ENCODE measurements at regions of chr1 and their contacts with region 1.

Region 1: DNA sequence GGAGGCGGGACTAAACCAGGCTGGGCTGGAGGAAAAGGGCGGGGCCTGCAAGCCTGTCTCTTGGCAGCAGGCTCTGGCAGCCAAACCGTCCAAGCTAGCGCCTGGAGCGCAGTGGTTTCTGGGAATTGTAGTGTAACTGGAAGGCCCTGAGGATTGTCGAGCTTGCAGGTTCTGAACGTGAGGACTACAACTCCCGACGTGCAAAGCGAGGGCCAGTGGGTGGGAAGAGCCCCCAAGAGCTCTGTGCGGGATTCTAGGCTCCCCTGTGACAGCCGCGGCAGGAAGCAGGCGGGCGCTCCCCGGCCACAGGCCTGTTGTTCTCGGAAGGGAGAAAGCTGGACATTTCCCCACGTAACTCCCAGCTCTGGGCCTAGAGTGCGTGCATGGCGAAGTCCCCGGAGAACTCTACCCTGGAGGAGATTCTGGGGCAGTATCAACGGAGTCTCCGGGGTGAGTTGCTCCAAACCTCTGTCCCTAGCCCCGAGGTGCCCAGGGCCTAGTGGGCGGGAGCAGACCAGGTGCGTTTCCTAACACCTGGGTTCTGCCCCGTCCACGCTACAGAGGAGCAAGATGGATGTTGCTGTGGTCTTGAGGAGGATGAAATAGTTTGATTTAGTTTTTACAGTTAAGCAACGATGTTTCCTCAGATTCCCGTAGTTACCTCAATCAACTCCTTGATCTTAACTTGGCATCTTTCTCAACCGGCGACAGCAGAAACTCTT is at the start of gene SDCCAG8:
- DNase-seq: peak; percentile 100
- ATAC-seq: peak; percentile 75
- H3K4me3 ChIP-seq: peak within 1 kb of the TSS; percentile 85
- H3K27ac ChIP-seq: peak within 1 kb of the TSS; percentile 77
- H3K4me1 ChIP-seq: peaks cover 32% of the 10 kb centered on the region
- H3K27me3 ChIP-seq: no peaks in the 10 kb centered on the region
- CTCF ChIP-seq: no peak
- total RNA-seq, gene SDCCAG8: 99.3 and 194 TPM in 2 replicates

Region 2: DNA sequence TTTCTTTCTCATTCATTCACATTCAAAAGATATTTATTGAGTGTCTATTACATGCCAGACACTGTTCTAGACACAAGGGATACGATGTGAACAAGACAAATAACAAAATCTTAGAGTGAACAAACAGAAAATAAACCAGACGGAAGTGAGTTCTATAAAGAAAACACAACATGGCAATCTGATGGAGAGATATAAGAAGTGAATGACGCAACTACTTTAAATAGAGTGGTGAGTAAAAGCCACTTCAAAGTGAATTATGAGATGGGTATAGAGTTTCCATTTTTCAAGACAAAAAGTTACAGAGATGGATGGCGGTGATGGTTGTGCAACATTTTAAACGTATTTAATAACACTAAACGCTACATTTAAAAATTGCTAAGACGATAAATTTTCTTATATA is 76.2 kb before region 1 on chr1:
- CTCF ChIA-PET with region 1: no interaction called
- POLR2A ChIA-PET with region 1: no interaction called
- intact Hi-C with region 1: loop called (anchors 5 kb)
- DNase-seq: peak; percentile 34
- ATAC-seq: no peak
- H3K4me3 ChIP-seq: no peak overlapping the region
- H3K27ac ChIP-seq: no peak overlapping the region
- H3K4me1 ChIP-seq: no peaks in the 10 kb centered on the region
- H3K27me3 ChIP-seq: no peaks in the 10 kb centered on the region
- CTCF ChIP-seq: no peak

Region 3: DNA sequence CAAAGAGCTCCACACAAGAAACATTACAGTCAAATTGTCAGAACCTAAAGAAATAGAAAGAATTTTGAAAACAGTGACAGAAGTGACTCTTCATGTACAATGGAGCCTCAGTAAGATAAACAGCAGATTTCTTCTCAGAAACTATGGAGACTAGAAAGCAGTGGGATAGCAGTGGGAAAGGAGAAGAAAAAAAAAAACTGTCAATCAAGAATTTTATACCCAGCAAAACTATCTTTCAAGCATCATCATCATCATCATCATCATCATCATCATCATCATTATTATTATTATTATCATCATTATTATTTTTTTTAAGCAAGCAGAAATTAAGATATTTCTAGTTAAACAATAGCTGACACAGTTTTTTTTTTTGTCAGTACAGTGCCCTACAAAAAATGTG is 25.0 kb before region 1 on chr1:
- CTCF ChIA-PET with region 1: no interaction called
- POLR2A ChIA-PET with region 1: no interaction called
- intact Hi-C with region 1: no loop called
- DNase-seq: peak; percentile 58
- ATAC-seq: no peak
- H3K4me3 ChIP-seq: no peak overlapping the region
- H3K27ac ChIP-seq: no peak overlapping the region
- H3K4me1 ChIP-seq: no peaks in the 10 kb centered on the region
- H3K27me3 ChIP-seq: no peaks in the 10 kb centered on the region
- CTCF ChIP-seq: no peak

Region 4: DNA sequence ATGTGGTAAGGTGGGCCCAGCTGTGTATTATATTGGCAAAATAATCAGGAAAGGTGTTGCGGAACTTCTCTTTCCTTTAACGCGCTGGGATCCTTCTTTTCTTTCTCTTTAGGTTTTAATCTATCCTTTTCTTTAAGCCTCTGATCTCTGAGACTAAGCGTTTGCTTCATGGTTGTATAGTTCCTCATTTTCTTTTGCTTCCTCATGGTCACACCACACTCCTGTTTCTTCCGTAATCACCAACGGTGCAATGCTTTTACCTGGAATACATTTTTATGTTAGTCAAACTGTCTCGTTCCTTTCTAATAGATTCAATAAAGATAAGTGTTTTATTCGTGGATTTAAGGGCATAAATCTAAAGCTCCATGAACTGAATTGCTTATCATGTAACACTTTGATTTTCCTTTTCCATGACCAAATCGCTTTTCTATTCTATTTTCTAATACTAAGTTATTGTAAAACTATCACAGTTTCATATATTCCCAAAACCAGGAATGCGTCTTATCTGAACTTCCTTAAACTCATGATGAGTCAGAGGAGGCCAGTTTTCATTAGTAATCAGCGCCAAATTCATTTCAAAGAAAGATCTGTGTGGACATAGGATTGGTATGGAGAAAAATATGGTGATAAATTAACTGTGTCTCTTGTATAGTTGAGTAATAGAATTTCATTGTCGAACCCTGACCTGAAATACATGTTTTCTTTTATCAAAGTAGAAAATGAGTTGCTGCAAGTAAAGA is 12.1 kb after region 1 on chr1:
- CTCF ChIA-PET with region 1: no interaction called
- POLR2A ChIA-PET with region 1: no interaction called
- intact Hi-C with region 1: loop called (anchors 1 kb)
- DNase-seq: peak; percentile 99
- ATAC-seq: peak; percentile 88
- H3K4me3 ChIP-seq: peak overlapping the region; percentile 50
- H3K27ac ChIP-seq: peak overlapping the region; percentile 87
- H3K4me1 ChIP-seq: peaks cover 46% of the 10 kb centered on the region
- H3K27me3 ChIP-seq: no peaks in the 10 kb centered on the region
- CTCF ChIP-seq: no peak

Region 5: GRCh38 chr1:243287652-243288051 is 31.7 kb after region 1 on chr1:
- CTCF ChIA-PET with region 1: interaction called, 4 read pairs
- POLR2A ChIA-PET with region 1: interaction called, 4 read pairs
- intact Hi-C with region 1: loop called (anchors 1 kb)
- DNase-seq: peak; percentile 91
- ATAC-seq: peak; percentile 94
- H3K4me3 ChIP-seq: 0 out of 2 replicates have a peak overlapping the region, but pooled peaks have one; percentile 0
- H3K27ac ChIP-seq: peak overlapping the region; percentile 67
- H3K4me1 ChIP-seq: peaks cover 29% of the 10 kb centered on the region
- H3K27me3 ChIP-seq: no peaks in the 10 kb centered on the region
- CTCF ChIP-seq: no peak

Region 6: DNA sequence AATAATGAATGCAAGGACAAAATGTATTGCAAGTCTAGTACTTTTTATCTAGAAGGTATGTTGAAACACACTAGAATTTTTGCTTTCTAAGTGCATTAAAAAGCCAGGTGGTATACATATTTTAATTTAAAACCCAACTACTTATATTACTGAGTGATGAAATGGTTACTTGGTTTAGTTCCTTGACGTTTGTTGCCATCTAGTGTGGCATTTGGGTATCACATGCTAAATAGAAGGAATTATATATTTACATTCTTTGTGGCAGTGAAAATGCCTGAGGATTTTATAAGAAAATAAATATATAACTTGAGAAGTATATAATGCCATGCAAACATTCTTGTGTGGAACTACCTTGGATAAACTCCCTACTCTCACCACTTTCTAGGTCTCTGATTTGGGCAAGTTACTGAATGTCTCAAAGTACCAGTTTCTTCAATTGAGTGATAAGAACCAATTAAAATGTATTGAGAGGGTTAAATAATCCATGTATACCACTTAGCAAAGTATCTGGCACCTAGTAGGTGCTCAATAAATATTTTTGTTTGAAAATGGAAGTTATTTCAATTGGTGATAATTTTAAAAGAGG is 69.4 kb after region 1 on chr1:
- CTCF ChIA-PET with region 1: no interaction called
- POLR2A ChIA-PET with region 1: no interaction called
- intact Hi-C with region 1: loop called (anchors 2 kb)
- DNase-seq: peak; percentile 93
- ATAC-seq: peak; percentile 76
- H3K4me3 ChIP-seq: no peak overlapping the region
- H3K27ac ChIP-seq: no peak overlapping the region
- H3K4me1 ChIP-seq: no peaks in the 10 kb centered on the region
- H3K27me3 ChIP-seq: no peaks in the 10 kb centered on the region
- CTCF ChIP-seq: peak; percentile 99

Measured in PC-3 (cell line).